ENCODE measurements at regions of chr2 and their contacts with region 1.

Region 1: GRCh38 chr2:101697124-101698013 is at the start of gene MAP4K4:
- DNase-seq: peak; percentile 71 to 87 (median 78)
- H3K4me3 ChIP-seq: peak within 1 kb of the TSS; percentile 62 to 92 (median 78)
- H3K27ac ChIP-seq: peak within 1 kb of the TSS; percentile 75 to 98 (median 96)
- H3K27me3 ChIP-seq: no peaks in the 10 kb centered on the region
- CTCF ChIP-seq: peak in 54 of 56 donors; percentile 13 to 74 (median 50)
- total RNA-seq, gene MAP4K4: 137 to 701 (median 262) TPM

Region 2: DNA sequence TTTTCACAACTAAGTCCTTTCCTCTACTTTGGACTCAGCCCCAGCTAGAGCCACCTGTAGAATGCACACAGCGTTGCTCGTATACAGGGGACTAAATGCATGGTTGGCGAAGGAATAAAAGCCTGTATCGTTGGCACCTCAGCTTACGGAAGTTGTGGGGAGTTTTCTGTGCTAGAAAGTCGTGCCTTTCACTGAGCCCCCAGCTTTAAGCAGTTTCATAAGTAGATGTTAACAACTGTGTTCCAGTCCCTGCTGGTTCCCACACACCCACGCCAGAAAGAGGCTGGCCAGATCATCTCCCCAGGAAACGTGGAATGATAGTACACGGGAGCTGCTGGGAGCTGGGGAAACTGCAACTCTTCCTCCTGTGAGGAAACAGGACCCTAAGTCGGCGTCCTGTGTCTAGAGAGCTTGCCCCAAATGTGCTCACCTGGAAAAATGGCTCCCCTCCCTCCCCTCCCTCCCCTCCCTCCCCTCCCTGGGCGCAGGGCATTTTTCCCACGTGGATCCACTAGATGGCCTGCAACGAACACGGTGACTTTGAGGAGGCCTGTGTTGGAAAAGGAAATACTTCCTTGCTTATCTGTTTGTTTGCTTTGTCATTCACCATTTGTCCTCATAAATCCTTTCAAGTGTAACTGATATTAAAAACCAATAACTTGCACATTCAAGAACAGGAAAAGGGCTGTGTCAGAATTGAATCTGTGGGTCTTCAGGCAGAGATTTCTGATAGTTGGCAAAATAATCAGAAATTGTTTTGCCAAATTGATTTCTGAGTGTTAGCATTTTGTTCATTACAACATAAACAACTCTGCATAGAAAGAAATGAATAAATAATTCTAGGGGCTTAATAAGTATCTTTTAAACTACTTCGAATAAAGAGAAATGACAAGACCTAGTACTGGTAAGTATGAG is 178.5 kb before region 1 on chr2:
- intact Hi-C with region 1: loop called (anchors 1 to 5 kb)
- DNase-seq: peak; percentile 41 to 70 (median 64)
- H3K4me3 ChIP-seq: peak overlapping the region in 41 of 59 donors; percentile 1 to 57 (median 33)
- H3K27ac ChIP-seq: peak overlapping the region in 35 of 59 donors; percentile 1 to 77 (median 54)
- H3K27me3 ChIP-seq: no peaks in the 10 kb centered on the region
- CTCF ChIP-seq: peak in 53 of 56 donors; percentile 31 to 76 (median 58)

Region 3: GRCh38 chr2:101619191-101619591 is 78.2 kb before region 1 on chr2:
- intact Hi-C with region 1: loop called (anchors 5 to 10 kb)
- DNase-seq: no peak
- H3K4me3 ChIP-seq: no peak overlapping the region
- H3K27ac ChIP-seq: no peak overlapping the region
- H3K27me3 ChIP-seq: no peaks in the 10 kb centered on the region
- CTCF ChIP-seq: no peak

Region 4: GRCh38 chr2:101751875-101752619 is 54.7 kb after region 1 on chr2:
- intact Hi-C with region 1: loop called in 1 of 2 experiments (anchors 5 kb)
- DNase-seq: no peak
- H3K4me3 ChIP-seq: peak overlapping the region in 35 of 59 donors; percentile 2 to 42 (median 20)
- H3K27ac ChIP-seq: peak overlapping the region; percentile 77 to 98 (median 93)
- H3K27me3 ChIP-seq: no peaks in the 10 kb centered on the region
- CTCF ChIP-seq: no peak

Region 5: GRCh38 chr2:101831351-101831865 is 134.0 kb after region 1 on chr2:
- intact Hi-C with region 1: loop called (anchors 1 to 5 kb)
- DNase-seq: peak; percentile 62 to 88 (median 78)
- H3K4me3 ChIP-seq: peak overlapping the region in 1 of 59 donors; percentile 3
- H3K27ac ChIP-seq: peak overlapping the region; percentile 1 to 98 (median 90)
- H3K27me3 ChIP-seq: no peaks in the 10 kb centered on the region
- CTCF ChIP-seq: peak; percentile 43 to 94 (median 84)

Measured in dorsolateral prefrontal cortex (tissue), 120 donors.